Caco-2 (cell line): ENCODE measurements at regions of chr4 and their contacts with region 1.

Region 1: DNA sequence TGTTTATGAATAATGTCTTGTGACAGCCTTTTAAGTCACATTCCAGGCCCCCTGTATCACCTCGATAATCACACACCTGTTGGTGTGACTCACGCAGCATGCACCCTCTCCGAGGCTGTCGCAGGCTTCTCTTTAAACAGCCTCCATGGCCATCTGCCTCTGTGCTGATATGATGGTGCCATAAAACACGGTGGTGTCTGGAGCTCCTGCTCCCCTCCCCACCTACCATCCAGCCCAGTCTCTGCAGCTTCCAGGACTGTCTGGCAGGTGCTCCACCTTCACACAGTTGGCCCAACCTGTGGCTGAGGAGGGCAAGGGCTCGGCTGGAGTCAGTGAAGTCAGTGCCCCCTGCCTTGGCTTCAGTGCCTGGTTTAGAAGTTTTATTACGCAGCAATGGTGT is 173.8 kb upstream of the RPL34 start:
- DNase-seq: peak; percentile 79 to 93
- H3K4me3 ChIP-seq: no peak overlapping the region
- H3K4me3 Mint-ChIP-seq: peak overlapping the region; percentile 35
- H3K27ac Mint-ChIP-seq: peak overlapping the region; percentile 39
- H3K4me1 ChIP-seq: peaks cover 31% of the 10 kb centered on the region
- H3K4me1 Mint-ChIP-seq: peaks cover 9% of the 10 kb centered on the region
- H3K27me3 ChIP-seq: no peaks in the 10 kb centered on the region
- H3K27me3 Mint-ChIP-seq: no peaks in the 10 kb centered on the region
- CTCF ChIP-seq: no peak

Region 2: DNA sequence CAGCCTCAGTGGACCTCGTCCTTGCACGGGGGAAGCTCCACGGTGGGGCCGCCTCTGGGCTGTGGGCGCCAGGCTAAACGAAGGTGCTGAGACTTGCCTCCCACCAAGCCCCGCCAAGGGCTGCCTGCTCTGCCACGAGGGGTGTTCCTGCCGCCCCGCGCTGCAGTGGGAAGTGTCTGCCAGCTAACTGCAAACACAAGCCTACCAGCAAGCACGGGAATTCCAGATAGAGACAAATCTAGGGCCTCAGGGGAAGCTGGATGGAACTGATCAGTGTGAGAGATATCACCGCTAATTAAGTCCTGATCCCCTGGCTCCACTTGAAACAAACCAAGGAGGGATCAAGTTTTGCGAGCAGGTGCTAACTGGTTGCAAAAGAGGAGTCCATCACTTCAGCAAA is 96.2 kb before region 1 on chr4:
- CTCF ChIA-PET with region 1: no interaction called
- POLR2A ChIA-PET with region 1: no interaction called
- intact Hi-C with region 1: loop called (anchors 1 kb)
- DNase-seq: no peak
- H3K4me3 ChIP-seq: no peak overlapping the region
- H3K4me3 Mint-ChIP-seq: no peak overlapping the region
- H3K27ac Mint-ChIP-seq: no peak overlapping the region
- H3K4me1 ChIP-seq: peaks cover 28% of the 10 kb centered on the region
- H3K4me1 Mint-ChIP-seq: peaks cover 20% of the 10 kb centered on the region
- H3K27me3 ChIP-seq: no peaks in the 10 kb centered on the region
- H3K27me3 Mint-ChIP-seq: no peaks in the 10 kb centered on the region
- CTCF ChIP-seq: no peak

Region 3: GRCh38 chr4:108466936-108467902 is 20.7 kb after region 1 on chr4:
- CTCF ChIA-PET with region 1: no interaction called
- POLR2A ChIA-PET with region 1: no interaction called
- intact Hi-C with region 1: no loop called
- DNase-seq: no peak
- H3K4me3 ChIP-seq: no peak overlapping the region
- H3K4me3 Mint-ChIP-seq: no peak overlapping the region
- H3K27ac Mint-ChIP-seq: no peak overlapping the region
- H3K4me1 ChIP-seq: no peaks in the 10 kb centered on the region
- H3K4me1 Mint-ChIP-seq: no peaks in the 10 kb centered on the region
- H3K27me3 ChIP-seq: no peaks in the 10 kb centered on the region
- H3K27me3 Mint-ChIP-seq: no peaks in the 10 kb centered on the region
- CTCF ChIP-seq: no peak

Region 4: GRCh38 chr4:108498925-108499324 is 52.4 kb after region 1 on chr4:
- CTCF ChIA-PET with region 1: no interaction called
- POLR2A ChIA-PET with region 1: interaction called, 11 read pairs
- intact Hi-C with region 1: no loop called
- DNase-seq: no peak
- H3K4me3 ChIP-seq: no peak overlapping the region
- H3K4me3 Mint-ChIP-seq: no peak overlapping the region
- H3K27ac Mint-ChIP-seq: no peak overlapping the region
- H3K4me1 ChIP-seq: no peaks in the 10 kb centered on the region
- H3K4me1 Mint-ChIP-seq: no peaks in the 10 kb centered on the region
- H3K27me3 ChIP-seq: no peaks in the 10 kb centered on the region
- H3K27me3 Mint-ChIP-seq: no peaks in the 10 kb centered on the region
- CTCF ChIP-seq: no peak

Region 5: DNA sequence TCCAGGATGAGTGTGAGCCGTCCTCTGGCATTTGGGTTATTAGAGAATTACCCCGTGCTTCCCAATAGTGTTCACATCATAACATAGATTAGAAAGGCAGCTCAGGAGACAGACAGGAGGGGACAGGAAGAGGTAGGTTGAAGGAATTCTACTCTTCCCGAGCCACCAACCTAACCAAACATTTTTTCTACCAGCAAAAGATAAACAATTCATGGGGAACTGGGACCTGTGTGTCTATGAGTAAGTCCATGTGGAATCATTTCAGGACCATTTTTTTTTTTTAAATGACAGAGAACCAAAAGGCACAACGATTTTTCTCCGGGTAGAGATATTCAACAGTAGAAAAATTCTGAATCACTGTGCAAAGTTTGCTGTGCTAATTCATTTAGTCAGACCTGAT is 490.5 kb after region 1 on chr4:
- CTCF ChIA-PET with region 1: no interaction called
- POLR2A ChIA-PET with region 1: no interaction called
- intact Hi-C with region 1: no loop called
- DNase-seq: no peak
- H3K4me3 ChIP-seq: no peak overlapping the region
- H3K4me3 Mint-ChIP-seq: no peak overlapping the region
- H3K27ac Mint-ChIP-seq: no peak overlapping the region
- H3K4me1 ChIP-seq: no peaks in the 10 kb centered on the region
- H3K4me1 Mint-ChIP-seq: no peaks in the 10 kb centered on the region
- H3K27me3 ChIP-seq: peaks cover 1% of the 10 kb centered on the region; the same call in 1 of the 2 replicates
- H3K27me3 Mint-ChIP-seq: no peaks in the 10 kb centered on the region
- CTCF ChIP-seq: no peak